ENCODE measurements at regions of chr22 and their contacts with region 1.

Region 1: DNA sequence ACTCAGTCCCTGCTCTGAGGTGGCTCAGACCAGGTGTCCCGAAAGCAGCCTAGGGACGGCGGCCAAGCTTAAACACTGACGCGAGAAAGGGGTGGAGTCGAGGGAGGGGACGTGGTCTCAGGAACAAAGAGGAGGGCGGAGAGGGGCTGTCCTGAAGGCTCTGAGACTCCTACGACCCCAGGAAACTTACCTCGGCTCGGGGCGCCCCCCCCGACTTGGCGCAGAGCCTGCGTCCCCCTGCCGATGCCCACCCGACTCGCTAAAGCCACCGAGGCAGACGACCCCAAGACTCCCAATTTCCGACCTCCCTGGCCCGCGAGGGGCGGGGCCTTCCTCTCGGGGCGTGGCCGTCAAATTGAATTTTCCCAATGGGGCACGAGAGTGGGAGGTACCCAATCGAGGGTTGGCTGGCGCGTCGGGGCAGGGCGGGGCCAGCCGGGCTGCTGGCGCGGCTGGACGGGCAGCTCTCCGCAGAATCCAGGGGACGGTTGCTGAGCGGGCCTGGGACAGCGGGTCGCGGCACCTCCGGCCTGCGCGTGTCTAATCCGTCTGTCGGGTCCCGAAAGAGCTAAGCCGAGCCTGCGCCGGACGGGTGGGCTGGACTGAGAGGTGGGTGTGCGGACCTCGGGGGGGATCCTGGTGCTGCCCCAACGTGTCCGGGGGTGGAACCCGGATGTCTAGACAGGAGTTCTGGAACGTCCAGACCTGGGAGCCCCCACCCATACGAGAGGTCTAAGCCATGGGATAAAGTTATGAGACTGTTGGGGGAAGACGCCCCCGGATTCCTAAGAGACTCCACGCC is at the start of gene SMTN:
- DNase-seq: peak; percentile 93
- H3K4me3 ChIP-seq: peak within 1 kb of the TSS; percentile 62
- H3K27ac ChIP-seq: peak within 1 kb of the TSS; percentile 89
- H3K4me1 ChIP-seq: peaks cover 18% of the 10 kb centered on the region
- H3K27me3 ChIP-seq: no peaks in the 10 kb centered on the region
- CTCF ChIP-seq: no peak
- total RNA-seq, gene SMTN: 40.0 and 43.7 TPM in 2 replicates

Region 2: DNA sequence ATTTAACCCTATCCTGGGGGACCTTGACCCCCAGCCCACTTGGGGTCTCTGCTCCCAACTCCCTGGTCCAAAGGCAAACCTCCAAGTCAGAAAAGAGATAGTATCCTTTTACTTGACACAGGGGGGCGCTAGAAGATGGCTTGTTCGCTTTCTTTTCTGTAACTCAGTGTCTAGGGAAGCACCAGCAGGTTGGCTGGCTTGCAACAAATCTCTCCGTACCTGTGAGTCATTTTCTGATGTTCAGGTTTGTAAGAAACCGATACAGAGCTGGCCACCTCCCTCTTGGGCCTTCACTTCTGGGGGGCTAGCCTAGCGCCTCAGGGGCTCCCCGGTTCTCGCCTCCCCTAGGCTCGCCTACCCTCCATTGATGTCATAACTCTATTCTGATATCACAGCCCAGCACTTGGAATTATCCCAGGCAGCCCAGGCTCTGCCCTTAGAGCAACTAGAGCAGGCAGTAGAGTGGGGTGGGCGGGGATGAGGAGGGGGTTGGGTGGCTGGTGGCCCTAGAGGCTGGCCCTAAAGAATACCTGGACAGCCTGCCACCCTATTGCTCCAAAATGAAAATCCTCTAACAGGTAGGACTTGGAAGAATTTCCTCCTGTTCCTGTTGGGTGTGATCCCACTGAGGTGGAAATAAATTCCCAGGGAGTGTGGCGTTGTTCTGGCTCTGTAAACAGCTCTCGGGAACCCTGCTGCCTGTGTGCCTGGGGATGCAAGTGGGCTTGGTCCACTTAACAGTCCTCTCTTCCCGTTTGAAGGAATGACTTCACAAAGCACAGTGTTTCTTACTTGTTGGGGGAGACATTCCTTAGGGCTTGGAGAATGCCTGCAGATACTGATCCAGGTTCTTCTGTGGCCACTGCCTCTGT is 317.0 kb before region 1 on chr22:
- CTCF ChIA-PET with region 1: no interaction called
- POLR2A ChIA-PET with region 1: no interaction called
- intact Hi-C with region 1: loop called (anchors 5 kb)
- DNase-seq: peak; percentile 75
- H3K4me3 ChIP-seq: no peak overlapping the region
- H3K27ac ChIP-seq: no peak overlapping the region
- H3K4me1 ChIP-seq: no peaks in the 10 kb centered on the region
- H3K27me3 ChIP-seq: no peaks in the 10 kb centered on the region
- CTCF ChIP-seq: peak; percentile 73

Region 3: DNA sequence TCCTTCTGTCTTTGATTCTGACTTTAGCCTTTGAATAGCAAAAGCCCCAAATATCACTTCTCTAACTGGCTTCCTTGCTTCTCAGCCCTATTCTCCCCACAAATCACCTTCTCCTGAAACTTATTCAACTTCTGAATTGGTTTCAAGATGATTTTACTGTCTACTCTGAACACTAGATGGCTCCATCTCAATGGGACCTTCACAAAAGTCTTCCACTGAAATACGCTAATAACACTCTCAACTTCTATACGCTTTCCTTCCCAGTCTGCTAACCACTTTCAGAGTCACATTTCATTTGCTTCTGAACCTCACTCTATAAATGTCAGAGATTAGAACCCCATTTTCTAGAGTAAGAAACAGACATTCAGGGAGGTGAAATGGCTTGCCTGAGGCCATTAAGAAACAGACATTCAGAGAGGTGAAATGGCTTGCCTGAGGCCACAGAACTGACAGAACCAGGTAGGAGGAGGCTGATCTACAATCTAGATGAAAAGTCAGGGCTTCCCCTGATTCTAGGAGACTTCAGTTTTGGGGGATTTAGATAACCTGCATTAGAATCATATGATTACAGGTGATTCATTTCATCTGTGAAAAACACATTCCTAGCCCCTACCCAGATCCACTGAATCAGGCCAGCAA is 133.1 kb before region 1 on chr22:
- CTCF ChIA-PET with region 1: interaction called, 12 read pairs
- POLR2A ChIA-PET with region 1: no interaction called
- intact Hi-C with region 1: loop called (anchors 2 kb)
- DNase-seq: peak; percentile 75
- H3K4me3 ChIP-seq: no peak overlapping the region
- H3K27ac ChIP-seq: no peak overlapping the region
- H3K4me1 ChIP-seq: peaks cover 17% of the 10 kb centered on the region
- H3K27me3 ChIP-seq: no peaks in the 10 kb centered on the region
- CTCF ChIP-seq: peak; percentile 69

Region 4: GRCh38 chr22:30968924-30969539 is 112.0 kb before region 1 on chr22 and contains the start of gene TUG1:
- CTCF ChIA-PET with region 1: no interaction called
- POLR2A ChIA-PET with region 1: no interaction called
- intact Hi-C with region 1: loop called (anchors 5 kb)
- DNase-seq: peak; percentile 99
- H3K4me3 ChIP-seq: peak within 1 kb of the TSS; percentile 81
- H3K27ac ChIP-seq: peak within 1 kb of the TSS; percentile 96
- H3K4me1 ChIP-seq: no peaks in the 10 kb centered on the region
- H3K27me3 ChIP-seq: no peaks in the 10 kb centered on the region
- CTCF ChIP-seq: no peak
- total RNA-seq, gene TUG1: 65.8 and 70.0 TPM in 2 replicates

Region 5: DNA sequence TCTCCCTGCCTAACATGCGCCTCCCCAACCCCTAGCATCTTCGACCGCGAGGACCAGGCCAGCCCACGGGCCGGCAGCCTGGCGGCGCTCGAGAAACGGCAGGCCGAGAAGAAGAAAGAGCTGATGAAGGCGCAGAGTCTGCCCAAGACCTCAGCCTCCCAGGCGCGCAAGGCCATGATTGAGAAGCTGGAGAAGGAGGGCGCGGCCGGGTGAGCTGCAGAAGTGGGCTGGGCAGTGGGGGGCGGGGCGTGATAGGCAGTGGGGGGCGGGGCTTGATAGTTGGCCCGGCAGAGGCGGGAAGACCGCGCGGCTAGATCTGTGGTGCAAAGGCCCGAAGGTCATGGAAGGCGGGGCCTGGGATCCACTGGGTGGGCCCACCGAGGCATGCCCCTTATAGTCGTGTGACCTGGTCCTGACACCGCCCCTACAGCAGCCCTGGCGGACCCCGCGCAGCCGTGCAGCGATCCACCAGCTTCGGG is 17.6 kb after region 1 on chr22:
- CTCF ChIA-PET with region 1: no interaction called
- POLR2A ChIA-PET with region 1: no interaction called
- intact Hi-C with region 1: no loop called
- DNase-seq: no peak
- H3K4me3 ChIP-seq: no peak overlapping the region
- H3K27ac ChIP-seq: no peak overlapping the region
- H3K4me1 ChIP-seq: no peaks in the 10 kb centered on the region
- H3K27me3 ChIP-seq: no peaks in the 10 kb centered on the region
- CTCF ChIP-seq: no peak

Region 6: GRCh38 chr22:31872209-31872608 is 791.2 kb after region 1 on chr22:
- CTCF ChIA-PET with region 1: no interaction called
- POLR2A ChIA-PET with region 1: no interaction called
- intact Hi-C with region 1: no loop called
- DNase-seq: no peak
- H3K4me3 ChIP-seq: no peak overlapping the region
- H3K27ac ChIP-seq: no peak overlapping the region
- H3K4me1 ChIP-seq: peaks cover 8% of the 10 kb centered on the region
- H3K27me3 ChIP-seq: no peaks in the 10 kb centered on the region
- CTCF ChIP-seq: peak; percentile 42; the same call in 1 of the 2 replicates

Measured in A673 (cell line).